Calu3 (cell line): ENCODE measurements at regions of chr5 and their contacts with region 1.

Region 1: GRCh38 chr5:152349683-152350526 is 55.2 kb downstream of the NMUR2 start:
- DNase-seq: peak; percentile 77
- H3K4me3 Mint-ChIP-seq: no peak overlapping the region
- H3K27ac Mint-ChIP-seq: no peak overlapping the region
- H3K4me1 Mint-ChIP-seq: peaks cover 13% of the 10 kb centered on the region
- H3K27me3 Mint-ChIP-seq: no peaks in the 10 kb centered on the region
- CTCF ChIP-seq: peak; percentile 95

Region 2: DNA sequence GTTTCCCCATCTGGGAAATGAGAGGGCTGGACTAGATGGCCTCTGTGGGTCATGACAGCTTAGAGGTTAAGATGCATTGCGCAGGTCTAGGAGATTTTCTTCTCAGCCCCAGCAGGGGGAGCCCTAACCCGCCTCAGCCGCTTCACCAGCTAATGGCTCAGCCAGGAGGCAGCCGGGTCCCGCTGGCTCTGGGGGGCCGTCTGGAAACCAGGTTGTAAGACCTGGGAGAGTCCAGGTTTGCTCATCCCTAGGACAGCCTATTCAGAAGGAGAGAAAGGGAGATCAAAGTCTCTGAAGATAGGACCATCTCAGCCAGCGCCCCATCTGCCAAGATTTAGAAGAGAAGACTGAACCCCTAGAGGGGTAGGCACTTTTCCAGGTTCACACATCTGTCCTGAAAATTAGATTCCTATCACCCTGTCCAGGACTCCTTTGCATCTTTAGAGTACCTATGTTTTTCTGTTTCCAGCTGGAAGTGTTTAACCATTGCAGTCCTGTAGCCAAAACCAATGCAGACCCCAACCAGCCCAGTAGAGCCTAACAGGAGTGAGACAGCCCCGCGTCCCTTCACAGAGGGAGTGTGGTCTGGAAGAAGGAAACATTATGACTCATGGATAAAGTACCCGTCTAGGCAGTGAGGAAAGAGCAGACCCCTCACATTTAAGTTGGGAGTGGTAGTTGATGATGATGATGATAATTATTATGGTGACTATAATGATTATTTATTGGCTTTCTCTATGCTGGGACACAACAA is 690.7 kb before region 1 on chr5:
- CTCF ChIA-PET with region 1: interaction called, 4 read pairs
- intact Hi-C with region 1: loop called (anchors 5 kb)
- DNase-seq: peak; percentile 93
- H3K4me3 Mint-ChIP-seq: no peak overlapping the region
- H3K27ac Mint-ChIP-seq: no peak overlapping the region
- H3K4me1 Mint-ChIP-seq: peaks cover 17% of the 10 kb centered on the region
- H3K27me3 Mint-ChIP-seq: peaks cover 22% of the 10 kb centered on the region
- CTCF ChIP-seq: peak; percentile 90

Region 3: GRCh38 chr5:151721087-151721646 is 628.7 kb before region 1 on chr5:
- CTCF ChIA-PET with region 1: no interaction called
- intact Hi-C with region 1: no loop called
- DNase-seq: no peak
- H3K4me3 Mint-ChIP-seq: no peak overlapping the region
- H3K27ac Mint-ChIP-seq: no peak overlapping the region
- H3K4me1 Mint-ChIP-seq: peaks cover 32% of the 10 kb centered on the region
- H3K27me3 Mint-ChIP-seq: no peaks in the 10 kb centered on the region
- CTCF ChIP-seq: no peak

Region 4: DNA sequence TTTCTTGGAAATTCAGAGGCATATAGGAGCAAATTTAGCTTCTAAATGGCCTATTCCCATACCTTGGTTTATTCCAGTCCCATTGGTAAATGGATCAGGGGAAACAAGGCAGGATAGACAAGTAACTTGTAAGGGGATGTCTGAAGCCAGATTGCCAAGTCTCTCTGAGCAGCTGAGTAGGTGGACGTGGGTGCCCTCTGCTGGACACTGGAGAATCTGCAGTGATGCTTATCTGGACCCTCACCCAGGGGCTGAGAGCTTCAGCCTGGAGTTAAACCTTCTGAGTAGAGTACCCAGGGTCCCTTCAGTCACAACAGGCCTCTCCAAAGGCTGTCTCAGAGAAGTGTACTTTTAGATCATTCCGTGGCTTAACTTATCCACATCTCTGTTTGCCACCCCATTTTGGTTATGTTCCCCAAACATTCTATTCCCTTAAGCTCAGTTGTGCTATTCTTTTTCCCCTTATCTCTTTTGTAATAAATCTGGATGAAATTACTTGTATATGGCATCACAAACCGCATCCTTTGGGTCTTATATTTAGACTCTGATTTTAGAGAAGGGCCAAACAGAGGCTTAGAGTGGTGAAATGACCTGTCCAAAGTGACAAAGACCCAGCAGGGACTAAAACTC is 206.9 kb before region 1 on chr5:
- CTCF ChIA-PET with region 1: interaction called, 12 read pairs
- intact Hi-C with region 1: loop called (anchors 2 kb)
- DNase-seq: peak; percentile 76
- H3K4me3 Mint-ChIP-seq: no peak overlapping the region
- H3K27ac Mint-ChIP-seq: no peak overlapping the region
- H3K4me1 Mint-ChIP-seq: no peaks in the 10 kb centered on the region
- H3K27me3 Mint-ChIP-seq: peaks cover 24% of the 10 kb centered on the region
- CTCF ChIP-seq: peak; percentile 87

Region 5: DNA sequence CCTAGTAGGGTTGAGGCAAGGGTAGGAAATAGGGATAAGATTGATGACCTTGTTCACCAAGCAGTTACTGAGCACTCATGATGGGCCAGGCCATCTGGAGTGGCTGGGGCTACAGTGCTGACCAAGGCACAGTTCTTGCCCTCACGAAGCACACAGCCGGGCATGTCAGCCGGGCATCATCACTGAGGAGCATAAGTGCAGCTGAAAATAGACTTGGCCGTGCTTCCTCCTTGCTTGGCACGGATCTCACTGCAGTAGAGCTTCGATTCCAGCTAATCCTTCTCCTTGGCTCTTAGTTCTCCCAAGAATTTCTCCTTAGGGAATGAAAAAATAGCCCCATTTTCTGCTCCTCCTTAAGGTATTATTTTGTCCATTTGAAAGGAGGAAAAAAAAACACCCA is 61.4 kb before region 1 on chr5:
- CTCF ChIA-PET with region 1: interaction called, 3 read pairs
- intact Hi-C with region 1: loop called (anchors 5 kb)
- DNase-seq: no peak
- H3K4me3 Mint-ChIP-seq: no peak overlapping the region
- H3K27ac Mint-ChIP-seq: no peak overlapping the region
- H3K4me1 Mint-ChIP-seq: peaks cover 11% of the 10 kb centered on the region
- H3K27me3 Mint-ChIP-seq: no peaks in the 10 kb centered on the region
- CTCF ChIP-seq: no peak

Region 6: DNA sequence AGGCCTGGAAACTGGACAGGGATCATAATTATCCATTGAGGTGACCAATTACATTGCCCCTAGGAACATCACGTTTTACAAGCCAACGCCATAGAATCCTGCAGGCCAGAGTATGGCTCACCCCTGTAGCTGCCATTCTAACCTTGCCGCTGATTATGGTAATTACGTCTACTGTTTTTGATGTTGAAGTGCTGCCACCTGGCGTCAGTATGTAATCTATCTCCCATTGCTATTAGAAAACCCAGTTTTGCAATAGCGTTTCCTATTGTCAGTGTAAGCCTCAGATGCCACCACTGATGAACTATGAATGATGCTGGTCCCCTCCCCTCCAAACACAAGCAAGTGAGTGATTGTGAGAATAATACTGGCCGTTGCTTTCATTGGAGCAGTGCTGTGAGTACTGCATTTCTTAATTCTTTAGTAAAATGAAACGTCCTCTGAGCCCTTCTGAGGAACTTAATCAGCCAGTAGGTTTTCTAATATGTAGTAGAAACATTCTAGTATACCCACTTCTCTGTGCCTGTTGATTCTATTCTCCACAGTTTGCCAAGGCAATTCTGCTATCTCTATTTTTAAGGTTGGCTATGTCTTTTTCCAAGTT is 155.6 kb after region 1 on chr5:
- CTCF ChIA-PET with region 1: interaction called, 10 read pairs
- intact Hi-C with region 1: no loop called
- DNase-seq: peak; percentile 73
- H3K4me3 Mint-ChIP-seq: no peak overlapping the region
- H3K27ac Mint-ChIP-seq: no peak overlapping the region
- H3K4me1 Mint-ChIP-seq: peaks cover 48% of the 10 kb centered on the region
- H3K27me3 Mint-ChIP-seq: no peaks in the 10 kb centered on the region
- CTCF ChIP-seq: peak; percentile 79